MCF 10A (cell line): ENCODE measurements at regions of chr12 and their contacts with region 1.

Region 1: DNA sequence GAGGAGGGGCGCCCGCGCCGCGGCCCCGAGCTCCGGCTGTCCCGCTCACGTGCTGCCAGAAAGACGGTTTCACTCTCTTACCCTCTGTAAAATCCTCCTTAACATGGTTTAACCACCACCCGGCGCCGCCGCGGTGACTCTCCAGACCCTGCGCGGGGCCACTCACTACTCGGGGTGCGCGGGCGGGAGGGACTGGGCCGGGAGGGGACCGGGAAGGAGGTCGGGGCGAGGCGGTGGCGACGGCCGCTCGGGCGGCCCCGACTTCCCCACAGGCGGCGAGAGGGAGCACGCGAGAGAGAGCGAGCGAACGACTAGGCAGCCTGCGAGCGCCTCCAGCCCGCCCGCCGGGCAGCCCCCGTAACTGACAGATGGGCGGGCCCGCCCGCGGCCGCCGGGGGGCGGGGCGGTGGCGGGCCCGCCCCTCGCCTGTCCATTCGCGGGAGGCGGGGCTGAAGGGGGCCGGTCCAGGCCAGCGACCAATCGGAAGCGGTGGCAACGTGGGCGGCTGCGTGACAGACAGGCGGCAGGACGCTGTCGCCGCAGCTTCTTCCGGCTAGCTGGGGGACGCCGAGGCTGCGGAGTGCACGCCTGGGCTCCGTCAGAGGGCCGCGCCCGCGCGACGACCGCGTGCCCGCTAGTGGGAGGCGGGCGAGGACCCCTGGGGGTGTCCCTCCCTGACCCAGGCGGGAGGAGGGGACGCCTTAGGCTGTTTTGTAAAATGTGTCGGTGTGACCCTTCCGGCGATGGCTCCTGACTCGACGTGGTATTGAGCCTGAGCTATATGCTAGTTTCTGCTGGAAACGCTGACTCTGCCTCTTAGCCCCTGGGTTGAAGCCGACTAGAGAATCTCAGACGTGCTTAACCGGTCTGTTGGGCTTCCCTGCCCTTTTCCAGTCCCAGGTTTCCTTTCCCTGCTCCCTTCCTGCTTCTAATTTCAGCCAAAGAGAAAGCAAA is at the start of gene EEA1:
- DNase-seq: peak; percentile 95
- H3K4me3 Mint-ChIP-seq: peak within 1 kb of the TSS; percentile 75
- H3K27ac Mint-ChIP-seq: peak within 1 kb of the TSS; percentile 88
- H3K4me1 Mint-ChIP-seq: peaks cover 26% of the 10 kb centered on the region
- H3K27me3 Mint-ChIP-seq: no peaks in the 10 kb centered on the region
- CTCF ChIP-seq: no peak
- total RNA-seq, gene EEA1: 46.3 and 50.1 TPM in 2 replicates

Region 2: GRCh38 chr12:92363295-92364146 is 565.7 kb before region 1 on chr12:
- CTCF ChIA-PET with region 1: no interaction called
- POLR2A ChIA-PET with region 1: no interaction called
- intact Hi-C with region 1: no loop called
- DNase-seq: no peak
- H3K4me3 Mint-ChIP-seq: no peak overlapping the region
- H3K27ac Mint-ChIP-seq: no peak overlapping the region
- H3K4me1 Mint-ChIP-seq: no peaks in the 10 kb centered on the region
- H3K27me3 Mint-ChIP-seq: no peaks in the 10 kb centered on the region
- CTCF ChIP-seq: no peak

Region 3: DNA sequence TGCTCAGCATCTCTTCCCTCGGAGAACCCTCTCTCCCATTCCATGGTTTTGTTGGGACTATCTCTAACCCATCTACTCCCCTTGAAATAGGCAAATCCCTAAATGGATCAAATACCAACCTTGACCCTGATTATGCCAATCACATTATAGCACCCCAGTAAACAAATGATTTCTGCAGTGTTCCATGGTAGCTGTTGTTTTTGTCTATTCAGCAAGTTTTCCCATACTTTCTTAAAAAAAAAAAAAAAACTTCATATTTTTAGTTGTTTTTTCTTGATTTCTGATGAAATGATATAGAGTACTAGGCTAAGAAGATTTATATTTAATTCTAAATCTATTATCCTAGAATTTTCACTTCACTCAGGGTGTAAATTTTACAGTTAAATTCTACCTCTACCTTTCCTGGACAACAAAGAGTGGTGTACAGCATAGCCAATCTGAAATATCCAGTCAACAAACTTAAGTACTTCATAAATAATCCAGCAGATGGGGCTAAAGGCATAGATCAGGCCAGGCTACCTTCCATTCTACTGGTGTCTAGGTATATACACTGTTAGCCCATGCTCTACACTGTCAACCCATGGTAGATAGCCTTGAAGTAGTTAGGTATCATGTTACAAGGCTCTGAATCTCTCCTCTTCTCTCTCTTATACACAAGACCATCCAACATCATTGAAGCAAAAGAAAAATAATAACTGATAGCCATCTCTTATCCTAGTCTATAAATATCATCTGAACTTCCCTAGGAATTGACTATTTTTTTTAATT is 144.3 kb before region 1 on chr12:
- CTCF ChIA-PET with region 1: interaction called, 17 read pairs
- POLR2A ChIA-PET with region 1: interaction called, 18 read pairs
- intact Hi-C with region 1: loop called (anchors 5 kb)
- DNase-seq: peak; percentile 80
- H3K4me3 Mint-ChIP-seq: peak overlapping the region; percentile 37
- H3K27ac Mint-ChIP-seq: peak overlapping the region; percentile 98
- H3K4me1 Mint-ChIP-seq: peaks cover 30% of the 10 kb centered on the region
- H3K27me3 Mint-ChIP-seq: no peaks in the 10 kb centered on the region
- CTCF ChIP-seq: peak; percentile 49

Region 4: GRCh38 chr12:92899388-92900001 is 29.7 kb before region 1 on chr12:
- CTCF ChIA-PET with region 1: interaction called, 6 read pairs
- POLR2A ChIA-PET with region 1: interaction called, 122 read pairs
- intact Hi-C with region 1: loop called (anchors 1 kb)
- DNase-seq: peak; percentile 98
- H3K4me3 Mint-ChIP-seq: peak overlapping the region; percentile 73
- H3K27ac Mint-ChIP-seq: peak overlapping the region; percentile 72
- H3K4me1 Mint-ChIP-seq: peaks cover 16% of the 10 kb centered on the region
- H3K27me3 Mint-ChIP-seq: no peaks in the 10 kb centered on the region
- CTCF ChIP-seq: no peak

Region 5: GRCh38 chr12:92955997-92956663 is 26.9 kb after region 1 on chr12:
- CTCF ChIA-PET with region 1: interaction called, 3 read pairs
- POLR2A ChIA-PET with region 1: interaction called, 15 read pairs
- intact Hi-C with region 1: no loop called
- DNase-seq: peak; percentile 28
- H3K4me3 Mint-ChIP-seq: no peak overlapping the region
- H3K27ac Mint-ChIP-seq: no peak overlapping the region
- H3K4me1 Mint-ChIP-seq: peaks cover 6% of the 10 kb centered on the region
- H3K27me3 Mint-ChIP-seq: no peaks in the 10 kb centered on the region
- CTCF ChIP-seq: no peak

Region 6: GRCh38 chr12:93121729-93122488 is 192.7 kb after region 1 on chr12:
- CTCF ChIA-PET with region 1: interaction called, 3 read pairs
- POLR2A ChIA-PET with region 1: interaction called, 18 read pairs
- intact Hi-C with region 1: no loop called
- DNase-seq: peak; percentile 48
- H3K4me3 Mint-ChIP-seq: peak overlapping the region; percentile 24
- H3K27ac Mint-ChIP-seq: peak overlapping the region; percentile 94
- H3K4me1 Mint-ChIP-seq: peaks cover 27% of the 10 kb centered on the region
- H3K27me3 Mint-ChIP-seq: no peaks in the 10 kb centered on the region
- CTCF ChIP-seq: no peak

Region 7: DNA sequence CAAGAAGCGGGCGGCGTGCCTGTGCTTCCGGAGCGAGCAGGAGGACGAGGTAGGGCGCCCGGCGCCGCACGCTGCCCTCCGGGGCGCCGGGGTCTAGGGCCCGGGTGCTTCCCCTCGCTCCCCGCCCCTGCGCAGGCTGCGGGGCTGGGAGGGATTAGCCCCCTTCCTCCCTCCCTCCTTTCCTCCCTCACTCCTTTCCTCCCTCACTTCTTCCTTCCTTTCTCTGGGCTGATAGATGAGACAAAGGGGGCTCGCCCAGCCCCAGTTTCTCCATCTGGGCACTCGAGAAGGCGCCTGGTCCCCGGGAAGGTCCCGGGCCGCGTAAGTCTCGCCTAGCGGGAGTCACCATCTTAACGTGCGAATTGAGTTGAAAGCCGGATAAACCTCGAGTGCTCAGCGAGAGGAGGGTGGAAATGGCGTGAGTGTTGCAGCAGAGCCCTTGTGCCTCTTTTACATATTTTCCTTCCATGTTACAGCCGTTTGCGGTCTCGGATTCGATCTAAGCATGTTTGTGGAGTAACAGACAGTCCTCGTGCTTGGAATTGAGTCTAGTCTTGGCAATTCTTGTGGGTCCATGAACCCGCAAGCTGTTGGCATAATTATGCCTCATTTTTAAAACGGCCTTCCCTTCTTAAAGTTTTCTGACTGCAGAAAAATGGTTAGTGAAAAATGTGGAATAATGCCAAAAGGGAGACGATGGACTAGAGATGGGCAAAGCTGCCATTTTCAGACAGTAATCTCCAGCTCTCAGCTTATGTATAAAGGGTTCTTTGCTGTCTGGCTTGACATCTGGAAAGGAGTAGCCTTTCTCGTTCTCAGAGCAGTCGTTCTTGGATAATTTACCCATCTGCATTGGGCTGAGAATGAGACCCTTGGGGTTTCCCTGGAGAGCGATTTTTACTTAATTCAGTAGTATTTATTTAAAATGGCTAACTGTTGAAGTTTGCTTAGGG is 449.4 kb after region 1 on chr12:
- CTCF ChIA-PET with region 1: interaction called, 6 read pairs
- POLR2A ChIA-PET with region 1: interaction called, 13 read pairs
- intact Hi-C with region 1: loop called (anchors 5 kb)
- DNase-seq: peak; percentile 64
- H3K4me3 Mint-ChIP-seq: peak overlapping the region; percentile 98
- H3K27ac Mint-ChIP-seq: peak overlapping the region; percentile 50
- H3K4me1 Mint-ChIP-seq: peaks cover 24% of the 10 kb centered on the region
- H3K27me3 Mint-ChIP-seq: no peaks in the 10 kb centered on the region
- CTCF ChIP-seq: no peak